BJ (cell line): ENCODE measurements at regions of chr12 and their contacts with region 1.

Region 1: DNA sequence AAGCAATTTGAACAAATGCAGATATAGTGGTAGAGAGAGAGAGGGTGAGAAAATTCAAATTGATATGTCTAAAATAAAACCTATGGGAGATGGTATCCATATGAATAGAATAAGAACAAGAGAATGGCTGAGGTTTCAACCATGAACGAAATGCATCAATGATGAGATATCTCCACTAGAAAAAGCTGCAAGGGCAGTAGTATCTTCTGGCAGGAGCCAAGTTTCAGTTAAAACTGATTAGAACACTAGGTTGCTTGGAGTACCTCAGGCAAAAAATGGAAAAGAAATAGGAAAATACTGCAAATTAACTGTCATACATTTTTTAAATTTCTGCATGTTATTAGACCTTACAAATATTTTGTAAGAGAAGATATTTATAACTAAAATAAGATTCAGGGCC is 151.3 kb downstream of the ANKS1B start:
- DNase-seq: no peak
- H3K4me3 ChIP-seq: no peak overlapping the region
- H3K27me3 ChIP-seq: no peaks in the 10 kb centered on the region
- CTCF ChIP-seq: no peak

Region 2: DNA sequence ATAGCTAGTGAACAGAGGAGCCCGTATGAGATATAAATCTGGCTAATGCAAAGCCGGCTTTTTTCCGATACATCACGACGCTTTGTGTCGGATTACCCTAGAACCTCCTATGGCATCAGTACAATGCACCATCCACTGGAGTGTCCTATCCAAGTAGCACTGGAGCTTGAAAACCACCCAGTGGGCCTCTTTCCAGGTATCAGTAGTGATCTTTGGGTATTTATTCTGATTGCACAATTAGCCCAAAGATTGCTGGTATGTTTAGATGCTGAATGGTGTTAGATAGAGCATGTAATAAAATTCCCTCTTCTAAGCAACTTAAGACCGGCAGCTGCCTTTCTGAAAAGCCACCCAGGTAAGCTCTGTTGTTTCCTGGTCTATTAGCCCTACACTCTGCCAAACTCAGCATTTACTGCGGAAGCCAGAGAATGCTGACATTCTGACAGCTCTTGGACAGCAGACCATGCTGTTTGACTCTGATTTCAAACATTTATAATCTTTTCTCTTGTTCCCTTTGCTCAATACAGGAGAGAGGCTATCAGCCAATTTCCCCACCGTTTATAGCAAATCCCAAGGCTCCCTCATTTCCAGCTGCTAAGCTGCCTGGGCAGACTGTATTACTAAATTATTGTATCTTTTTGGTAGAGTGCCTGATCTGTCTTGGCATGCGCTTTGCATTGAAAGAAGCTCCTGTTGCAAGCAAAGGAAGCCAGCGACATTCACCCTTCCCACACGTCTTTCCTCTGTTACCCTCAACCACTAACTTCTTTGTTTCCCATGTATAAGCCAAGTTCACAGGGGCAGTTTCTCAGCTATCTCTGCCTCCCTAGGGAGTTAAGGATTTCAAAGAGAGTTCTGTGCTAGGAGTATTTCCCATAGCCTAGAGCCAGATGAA is 574.1 kb before region 1 on chr12:
- CTCF ChIA-PET with region 1: no interaction called
- POLR2A ChIA-PET with region 1: interaction called, 12 read pairs
- DNase-seq: no peak
- H3K4me3 ChIP-seq: no peak overlapping the region
- H3K27me3 ChIP-seq: no peaks in the 10 kb centered on the region
- CTCF ChIP-seq: no peak